ENCODE measurements at regions of chr16 and their contacts with region 1.

Region 1: DNA sequence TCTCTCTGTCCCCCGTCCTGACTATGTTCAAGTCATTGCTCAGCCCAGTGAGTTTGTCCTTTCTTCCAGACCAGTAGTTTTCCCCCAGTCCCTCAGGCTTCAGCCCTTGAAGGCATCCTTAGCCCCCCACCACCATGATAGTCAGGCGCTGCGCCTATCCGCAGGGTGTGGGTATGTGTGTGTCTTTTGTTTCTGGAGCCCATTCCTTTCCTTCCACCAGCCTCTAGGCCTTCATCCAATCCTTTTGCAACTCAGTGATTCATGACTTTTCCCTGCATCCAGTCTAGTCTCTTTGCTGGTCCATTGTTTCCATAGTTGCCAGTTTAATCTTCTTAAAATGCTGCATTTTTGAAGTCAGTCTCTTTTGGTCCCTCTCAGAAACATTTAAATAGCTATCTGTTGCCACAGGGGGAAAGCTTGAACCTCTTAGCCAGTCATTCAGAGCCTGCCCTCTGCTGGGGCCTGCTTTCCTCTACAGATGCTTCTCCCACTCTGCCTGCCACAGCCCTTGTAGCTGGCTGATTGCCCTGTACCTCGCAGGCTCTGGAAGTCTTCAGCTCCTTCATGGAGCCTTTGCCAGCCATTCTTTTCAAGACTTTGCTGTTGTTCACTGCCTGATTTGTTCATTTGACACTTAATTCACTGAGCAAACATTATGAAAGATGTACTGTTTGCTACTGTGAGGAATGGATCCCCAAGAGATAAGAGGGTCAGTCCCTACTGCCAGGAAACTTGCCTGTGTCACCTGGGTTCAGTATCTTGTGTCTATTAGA is 55.9 kb upstream of the ADCY7 start:
- DNase-seq: peak; percentile 82 to 89 (median 89)
- H3K4me3 ChIP-seq: no peak overlapping the region
- H3K27ac ChIP-seq: no peak overlapping the region
- H3K4me1 ChIP-seq: peaks cover 4 to 27% (median 13%) of the 10 kb centered on the region in 4 experiments
- H3K27me3 ChIP-seq: no peaks in the 10 kb centered on the region

Region 2: DNA sequence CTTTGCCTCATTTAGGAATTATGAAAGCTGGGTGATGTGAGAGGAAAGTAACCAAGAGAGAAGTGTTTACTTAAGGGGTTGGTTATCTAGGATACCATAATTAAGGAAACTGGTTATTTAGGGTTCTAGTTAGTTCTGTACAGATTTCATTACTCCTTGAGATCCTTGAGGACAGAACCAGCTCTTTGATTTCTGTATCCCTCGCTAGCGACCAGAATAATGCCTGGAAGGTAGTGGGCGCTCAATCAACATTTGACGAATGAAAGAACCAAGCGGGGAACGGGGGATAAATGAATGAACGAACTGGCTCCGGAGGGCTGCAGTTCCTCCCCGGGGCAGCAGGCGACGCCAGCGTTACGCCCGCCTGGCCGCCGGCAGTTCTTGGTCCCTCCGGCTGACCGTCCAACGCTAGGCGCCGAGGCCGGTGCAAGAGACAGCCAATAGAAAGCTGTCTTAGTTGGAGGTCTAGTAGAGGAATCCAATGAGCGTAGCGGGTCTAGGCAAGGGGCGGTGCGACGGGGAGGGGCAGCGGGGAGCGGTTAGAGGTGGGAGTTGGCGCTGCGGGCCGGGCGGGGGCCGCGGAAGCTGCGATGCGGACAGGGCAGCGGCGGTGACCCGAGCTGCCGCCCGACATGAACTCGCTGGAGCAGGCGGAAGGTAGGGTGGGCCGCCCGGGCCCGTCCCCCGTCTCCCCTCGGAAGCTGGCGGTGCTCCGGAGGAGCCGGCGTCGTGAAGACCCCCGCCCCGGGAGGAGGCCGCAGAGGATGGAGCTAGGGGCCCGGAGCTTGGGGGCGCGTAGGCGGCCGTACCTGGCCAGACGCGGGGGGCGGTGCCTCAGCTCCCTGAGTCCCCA is 185.5 kb before region 1 on chr16 and contains the start of gene CNEP1R1:
- CTCF ChIA-PET with region 1: interaction called, 33 read pairs
- POLR2A ChIA-PET with region 1: interaction called, 6 read pairs
- DNase-seq: peak; percentile 95 to 98 (median 97)
- H3K4me3 ChIP-seq: peak within 1 kb of the TSS; percentile 73 to 98 (median 96)
- H3K27ac ChIP-seq: peak within 1 kb of the TSS; percentile 46 to 82
- H3K4me1 ChIP-seq: peaks cover 8 to 19% (median 11%) of the 10 kb centered on the region in 4 experiments
- H3K27me3 ChIP-seq: peaks cover 0 to 2% (median 0%) of the 10 kb centered on the region in 5 experiments

Region 3: DNA sequence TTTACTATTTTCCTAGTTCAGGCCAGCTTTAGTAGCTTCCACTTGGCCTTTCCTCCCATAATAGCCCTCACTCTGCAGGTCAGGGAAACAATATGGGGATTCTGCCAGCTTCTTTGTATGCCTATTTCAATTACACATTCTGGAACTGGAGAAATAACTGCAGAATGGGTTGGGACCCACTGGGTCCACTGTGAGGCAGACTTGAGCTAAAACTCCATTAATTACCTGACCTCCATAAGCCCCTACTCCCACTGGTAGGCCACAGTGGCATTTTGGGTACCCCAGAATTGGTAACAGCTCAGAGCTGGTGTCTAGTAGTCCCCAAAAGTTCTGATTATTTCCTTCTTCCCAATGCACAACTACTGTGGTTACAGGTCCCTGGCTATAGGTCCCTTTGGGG is 74.1 kb before region 1 on chr16:
- CTCF ChIA-PET with region 1: interaction called, 14 read pairs
- POLR2A ChIA-PET with region 1: interaction called, 4 read pairs
- DNase-seq: peak in 1 of 3 donors; percentile 22
- H3K4me3 ChIP-seq: no peak overlapping the region
- H3K27ac ChIP-seq: no peak overlapping the region
- H3K4me1 ChIP-seq: no peaks in the 10 kb centered on the region
- H3K27me3 ChIP-seq: no peaks in the 10 kb centered on the region

Region 4: GRCh38 chr16:50235581-50235980 is 25.1 kb after region 1 on chr16:
- CTCF ChIA-PET with region 1: interaction called, 18 read pairs
- POLR2A ChIA-PET with region 1: no interaction called
- DNase-seq: no peak
- H3K4me3 ChIP-seq: no peak overlapping the region
- H3K27ac ChIP-seq: no peak overlapping the region
- H3K4me1 ChIP-seq: no peaks in the 10 kb centered on the region
- H3K27me3 ChIP-seq: no peaks in the 10 kb centered on the region

Region 5: DNA sequence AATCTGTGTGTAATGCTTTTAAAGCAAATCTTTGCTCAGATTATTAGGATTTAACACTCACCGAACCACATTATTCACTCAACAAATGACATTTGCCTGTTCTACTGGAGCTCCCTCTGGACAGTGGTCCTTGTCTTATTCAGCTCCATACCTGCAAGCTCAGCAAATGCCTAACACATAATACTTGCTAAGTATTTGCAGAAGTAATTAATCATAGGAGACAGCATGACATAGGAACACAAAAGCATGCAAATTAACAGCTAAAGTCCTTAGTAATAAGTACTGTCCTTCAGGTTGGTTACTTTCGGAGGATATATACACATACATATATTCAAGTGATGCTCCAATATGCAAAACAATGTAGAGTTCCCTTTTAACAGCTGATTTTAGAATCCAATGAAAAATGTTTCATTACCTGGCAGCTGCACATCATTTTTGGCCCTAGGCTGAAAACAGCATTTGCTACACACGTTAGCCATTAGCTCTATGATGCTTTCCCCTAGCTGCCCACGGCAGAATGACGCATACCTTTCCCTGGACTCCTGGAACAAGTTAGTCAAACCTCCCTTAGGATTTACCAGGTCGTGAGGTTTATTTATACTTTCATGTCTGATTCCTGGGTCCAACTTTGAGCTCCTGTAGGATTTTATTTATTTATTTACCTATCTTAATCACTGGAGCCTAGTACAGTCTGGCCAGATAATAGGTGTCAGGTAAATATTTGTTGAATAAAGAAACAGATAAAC is 149.8 kb after region 1 on chr16:
- CTCF ChIA-PET with region 1: interaction called, 44 read pairs
- POLR2A ChIA-PET with region 1: no interaction called
- DNase-seq: no peak
- H3K4me3 ChIP-seq: no peak overlapping the region
- H3K27ac ChIP-seq: no peak overlapping the region
- H3K4me1 ChIP-seq: peaks cover 0 to 6% (median 0%) of the 10 kb centered on the region in 4 experiments
- H3K27me3 ChIP-seq: no peaks in the 10 kb centered on the region

Measured in common myeloid progenitor, CD34-positive (primary cell).